MCF 10A (cell line): ENCODE measurements at regions of chr4 and their contacts with region 1.

Region 1: GRCh38 chr4:108570993-108571569 is 49.3 kb upstream of the RPL34 start:
- DNase-seq: peak; percentile 29
- H3K4me3 Mint-ChIP-seq: no peak overlapping the region
- H3K27ac Mint-ChIP-seq: no peak overlapping the region
- H3K4me1 Mint-ChIP-seq: no peaks in the 10 kb centered on the region
- H3K27me3 Mint-ChIP-seq: no peaks in the 10 kb centered on the region
- CTCF ChIP-seq: no peak

Region 2: DNA sequence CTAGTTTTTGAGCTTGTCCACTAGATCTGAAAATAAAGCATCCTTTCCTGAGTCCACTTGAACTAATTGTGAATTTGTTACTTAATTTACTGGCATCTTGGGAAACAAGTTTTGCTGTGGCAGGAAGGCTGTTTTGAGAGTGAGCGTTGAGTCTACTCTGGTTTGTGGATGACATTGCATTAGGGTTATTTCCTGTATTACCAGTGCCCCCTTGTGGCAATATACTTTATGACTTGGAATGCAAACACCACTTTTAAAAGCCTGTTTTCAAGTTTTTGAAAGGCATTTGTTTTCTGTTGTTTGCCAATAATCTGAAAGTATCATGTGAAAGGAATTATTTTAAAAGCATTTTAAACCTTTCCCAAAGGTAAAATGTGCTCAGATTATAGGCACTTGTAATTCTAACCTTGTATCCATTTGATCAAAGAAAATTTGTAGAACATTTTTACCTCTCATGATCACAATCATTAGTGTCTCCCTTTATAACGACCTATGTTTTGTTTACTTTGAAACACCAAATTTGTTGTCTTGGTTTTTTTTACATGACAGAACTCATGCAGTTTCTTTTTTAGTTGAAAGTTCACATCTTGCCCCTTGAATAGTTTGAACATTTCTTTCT is 657.7 kb before region 1 on chr4:
- CTCF ChIA-PET with region 1: interaction called, 3 read pairs
- POLR2A ChIA-PET with region 1: no interaction called
- intact Hi-C with region 1: loop called (anchors 10 kb)
- DNase-seq: peak; percentile 79
- H3K4me3 Mint-ChIP-seq: no peak overlapping the region
- H3K27ac Mint-ChIP-seq: no peak overlapping the region
- H3K4me1 Mint-ChIP-seq: no peaks in the 10 kb centered on the region
- H3K27me3 Mint-ChIP-seq: no peaks in the 10 kb centered on the region
- CTCF ChIP-seq: peak; percentile 50

Region 3: DNA sequence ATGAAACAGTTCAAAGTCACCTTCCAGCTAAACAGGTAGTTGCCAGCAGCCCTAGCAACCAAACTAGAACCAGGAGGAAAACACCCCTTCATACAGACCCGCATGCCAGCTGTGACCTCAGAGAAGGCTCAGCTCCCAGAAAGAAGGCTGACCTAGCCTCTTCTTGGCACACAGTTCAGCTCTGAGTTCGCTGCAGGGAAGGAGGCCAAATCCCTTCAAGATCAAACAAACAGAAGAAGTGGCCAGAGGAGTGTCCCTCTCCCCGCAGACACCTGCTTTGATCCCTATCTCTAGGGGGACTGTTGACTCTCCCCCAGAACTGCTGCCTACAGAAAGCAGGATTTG is 525.4 kb before region 1 on chr4:
- CTCF ChIA-PET with region 1: interaction called, 15 read pairs
- POLR2A ChIA-PET with region 1: no interaction called
- intact Hi-C with region 1: no loop called
- DNase-seq: peak; percentile 78
- H3K4me3 Mint-ChIP-seq: no peak overlapping the region
- H3K27ac Mint-ChIP-seq: peak overlapping the region; percentile 55
- H3K4me1 Mint-ChIP-seq: peaks cover 30% of the 10 kb centered on the region
- H3K27me3 Mint-ChIP-seq: no peaks in the 10 kb centered on the region
- CTCF ChIP-seq: no peak

Region 4: DNA sequence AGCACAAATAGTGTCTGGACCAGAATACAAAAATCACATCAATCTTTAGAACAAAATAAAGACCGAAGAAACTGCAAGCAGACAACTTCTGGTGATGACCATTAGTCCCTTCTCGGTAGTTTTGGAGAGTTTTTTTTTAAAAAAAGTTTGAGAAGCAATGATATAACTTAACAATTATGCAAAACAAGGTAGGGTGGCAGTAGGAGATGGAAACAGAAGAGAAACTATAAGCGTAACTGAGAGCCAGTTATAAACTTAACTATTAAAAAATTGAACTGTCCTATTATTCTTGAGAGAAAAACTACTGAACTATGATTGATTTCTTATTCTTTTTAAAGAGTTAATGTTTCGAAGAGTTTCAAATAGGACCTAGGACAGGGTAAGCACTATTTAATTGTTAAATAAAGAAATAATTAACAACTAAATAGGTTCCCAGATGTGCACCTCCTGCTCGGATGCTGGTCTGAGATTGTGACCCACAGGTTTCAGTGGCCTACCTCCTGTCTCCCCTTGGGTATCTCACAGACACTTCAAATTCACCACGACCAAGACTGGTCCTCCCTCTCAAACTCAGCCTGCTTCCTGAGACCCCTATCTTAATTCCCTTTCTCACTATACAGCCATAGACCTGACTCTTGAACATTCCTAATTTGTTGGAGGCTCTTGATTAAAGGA is 483.7 kb before region 1 on chr4:
- CTCF ChIA-PET with region 1: interaction called, 10 read pairs
- POLR2A ChIA-PET with region 1: no interaction called
- intact Hi-C with region 1: no loop called
- DNase-seq: no peak
- H3K4me3 Mint-ChIP-seq: no peak overlapping the region
- H3K27ac Mint-ChIP-seq: no peak overlapping the region
- H3K4me1 Mint-ChIP-seq: no peaks in the 10 kb centered on the region
- H3K27me3 Mint-ChIP-seq: no peaks in the 10 kb centered on the region
- CTCF ChIP-seq: no peak

Region 5: GRCh38 chr4:108560616-108561015 is 10.5 kb before region 1 on chr4:
- CTCF ChIA-PET with region 1: interaction called, 10 read pairs
- POLR2A ChIA-PET with region 1: no interaction called
- intact Hi-C with region 1: no loop called
- DNase-seq: no peak
- H3K4me3 Mint-ChIP-seq: no peak overlapping the region
- H3K27ac Mint-ChIP-seq: no peak overlapping the region
- H3K4me1 Mint-ChIP-seq: peaks cover 4% of the 10 kb centered on the region
- H3K27me3 Mint-ChIP-seq: no peaks in the 10 kb centered on the region
- CTCF ChIP-seq: no peak

Region 6: GRCh38 chr4:108714863-108715581 is 143.9 kb after region 1 on chr4:
- CTCF ChIA-PET with region 1: no interaction called
- POLR2A ChIA-PET with region 1: no interaction called
- intact Hi-C with region 1: no loop called
- DNase-seq: no peak
- H3K4me3 Mint-ChIP-seq: no peak overlapping the region
- H3K27ac Mint-ChIP-seq: no peak overlapping the region
- H3K4me1 Mint-ChIP-seq: no peaks in the 10 kb centered on the region
- H3K27me3 Mint-ChIP-seq: no peaks in the 10 kb centered on the region
- CTCF ChIP-seq: no peak

Region 7: DNA sequence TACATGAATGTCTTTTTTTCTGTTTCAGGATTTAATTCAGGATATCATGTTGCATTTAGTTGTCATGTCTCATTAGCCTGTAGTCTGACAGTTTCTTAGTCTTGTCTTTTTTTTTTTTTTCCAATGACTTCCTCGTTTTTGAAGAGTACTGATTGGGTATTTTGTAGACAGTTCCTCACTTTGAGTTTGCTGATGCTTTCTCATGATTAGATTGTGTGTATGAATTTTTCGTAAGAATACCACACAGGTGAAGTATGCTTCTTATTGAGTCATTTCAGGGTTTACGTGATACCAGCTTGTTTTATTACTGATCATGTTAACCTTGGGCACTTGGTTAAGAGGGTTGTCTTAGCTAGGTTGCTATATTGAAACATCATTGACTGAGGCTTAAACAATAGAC is 877.7 kb after region 1 on chr4:
- CTCF ChIA-PET with region 1: no interaction called
- POLR2A ChIA-PET with region 1: no interaction called
- intact Hi-C with region 1: no loop called
- DNase-seq: no peak
- H3K4me3 Mint-ChIP-seq: no peak overlapping the region
- H3K27ac Mint-ChIP-seq: no peak overlapping the region
- H3K4me1 Mint-ChIP-seq: peaks cover 11% of the 10 kb centered on the region
- H3K27me3 Mint-ChIP-seq: no peaks in the 10 kb centered on the region
- CTCF ChIP-seq: no peak